CD4-positive, alpha-beta memory T cell (primary cell): ENCODE measurements at regions of chr2 and their contacts with region 1.

Region 1: DNA sequence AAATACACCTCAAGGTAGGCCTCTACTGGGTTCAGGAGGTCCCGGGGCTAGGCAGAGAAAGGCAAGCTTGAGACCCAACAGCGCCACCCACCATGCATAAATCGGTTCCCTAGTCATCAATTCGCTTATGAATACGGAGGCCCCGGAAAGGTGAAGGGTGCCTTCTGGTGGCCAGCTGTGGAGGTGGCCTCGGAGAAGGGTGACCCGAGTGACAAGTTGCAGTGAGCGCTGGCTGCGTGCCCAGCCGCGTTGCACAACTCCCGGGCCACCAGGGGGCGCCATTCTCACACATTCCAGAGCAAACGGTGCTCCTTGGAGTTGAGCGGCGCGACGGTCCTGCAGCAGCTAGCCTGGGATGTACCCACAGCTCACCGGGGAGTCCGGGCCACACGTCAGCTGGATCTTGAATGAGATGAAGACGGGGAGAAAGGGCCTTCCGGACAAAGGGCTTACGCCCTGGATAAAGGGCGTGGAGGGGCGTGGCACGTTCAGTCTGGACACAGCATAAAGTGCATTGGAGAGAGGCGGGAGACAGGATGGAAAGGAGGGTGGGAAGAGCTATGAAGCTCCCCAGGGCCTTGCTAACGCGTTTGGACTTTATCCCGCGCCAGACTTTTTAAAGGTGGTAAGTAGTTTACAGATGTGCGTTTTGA is 20.4 kb downstream of the TMSB10 start:
- DNase-seq: peak; percentile 96 to 97 (median 97)
- H3K4me3 ChIP-seq: peak overlapping the region; percentile 73 to 86
- H3K4me3 Mint-ChIP-seq: peak overlapping the region; percentile 90 to 99 (median 95)
- H3K27ac ChIP-seq: peak overlapping the region; percentile 62
- H3K27ac Mint-ChIP-seq: peak overlapping the region; percentile 91 to 99 (median 95)
- H3K4me1 ChIP-seq: peaks cover 40% of the 10 kb centered on the region
- H3K4me1 Mint-ChIP-seq: peaks cover 25 to 48% (median 36%) of the 10 kb centered on the region in 4 donors
- H3K27me3 ChIP-seq: no peaks in the 10 kb centered on the region
- H3K27me3 Mint-ChIP-seq: no peaks in the 10 kb centered on the region

Region 2: GRCh38 chr2:84631047-84631446 is 294.8 kb before region 1 on chr2:
- CTCF ChIA-PET with region 1: interaction called, 5 read pairs
- POLR2A ChIA-PET with region 1: interaction called, 3 read pairs
- intact Hi-C with region 1: loop called (anchors 1 kb)
- DNase-seq: peak in 4 of 5 donors; percentile 46 to 57 (median 56)
- H3K4me3 ChIP-seq: no peak overlapping the region
- H3K4me3 Mint-ChIP-seq: peak overlapping the region in 1 of 8 donors; percentile 36
- H3K27ac ChIP-seq: no peak overlapping the region
- H3K27ac Mint-ChIP-seq: peak overlapping the region in 3 of 7 donors; percentile 30 to 65 (median 59)
- H3K4me1 ChIP-seq: peaks cover 24% of the 10 kb centered on the region
- H3K4me1 Mint-ChIP-seq: peaks cover 26 to 31% (median 28%) of the 10 kb centered on the region in 4 donors
- H3K27me3 ChIP-seq: no peaks in the 10 kb centered on the region
- H3K27me3 Mint-ChIP-seq: no peaks in the 10 kb centered on the region

Region 3: DNA sequence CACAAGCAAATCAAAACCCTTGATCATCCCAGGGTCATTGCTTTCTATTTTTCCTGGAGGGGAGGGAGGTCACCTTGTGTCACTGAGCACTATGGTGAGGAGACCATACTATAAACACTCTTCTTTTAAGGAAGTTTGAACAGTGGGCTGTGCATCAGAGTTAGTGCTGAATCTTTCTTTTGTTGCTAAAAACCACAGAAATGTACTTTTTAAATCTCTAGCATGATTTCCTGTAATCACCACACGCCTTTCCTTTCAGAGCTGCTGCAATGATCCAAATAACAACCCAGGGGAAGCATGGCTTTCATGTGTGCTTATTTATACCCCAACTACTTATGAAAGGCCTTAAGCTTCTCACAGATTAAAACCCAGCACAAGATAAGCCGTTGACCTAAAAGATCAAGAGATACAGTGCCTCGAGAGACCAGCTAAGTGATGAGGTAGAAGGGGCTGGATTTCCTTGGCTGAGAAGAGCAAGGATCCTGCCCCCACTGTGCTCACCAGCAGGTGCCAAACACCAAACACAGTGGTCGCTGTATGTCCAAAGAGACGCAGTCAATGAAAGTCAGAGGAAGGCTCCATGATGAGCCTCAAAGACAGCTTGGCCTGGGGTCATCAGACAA is 79.7 kb before region 1 on chr2:
- CTCF ChIA-PET with region 1: interaction called, 18 read pairs
- POLR2A ChIA-PET with region 1: interaction called, 16 read pairs
- intact Hi-C with region 1: no loop called
- DNase-seq: peak; percentile 67 to 84 (median 78)
- H3K4me3 ChIP-seq: peak overlapping the region; percentile 11 to 15
- H3K4me3 Mint-ChIP-seq: peak overlapping the region; percentile 31 to 84 (median 74)
- H3K27ac ChIP-seq: peak overlapping the region; percentile 61
- H3K27ac Mint-ChIP-seq: peak overlapping the region; percentile 92 to 99 (median 97)
- H3K4me1 ChIP-seq: peaks cover 99% of the 10 kb centered on the region
- H3K4me1 Mint-ChIP-seq: peaks cover 81 to 98% (median 90%) of the 10 kb centered on the region in 4 donors
- H3K27me3 ChIP-seq: no peaks in the 10 kb centered on the region
- H3K27me3 Mint-ChIP-seq: no peaks in the 10 kb centered on the region

Region 4: DNA sequence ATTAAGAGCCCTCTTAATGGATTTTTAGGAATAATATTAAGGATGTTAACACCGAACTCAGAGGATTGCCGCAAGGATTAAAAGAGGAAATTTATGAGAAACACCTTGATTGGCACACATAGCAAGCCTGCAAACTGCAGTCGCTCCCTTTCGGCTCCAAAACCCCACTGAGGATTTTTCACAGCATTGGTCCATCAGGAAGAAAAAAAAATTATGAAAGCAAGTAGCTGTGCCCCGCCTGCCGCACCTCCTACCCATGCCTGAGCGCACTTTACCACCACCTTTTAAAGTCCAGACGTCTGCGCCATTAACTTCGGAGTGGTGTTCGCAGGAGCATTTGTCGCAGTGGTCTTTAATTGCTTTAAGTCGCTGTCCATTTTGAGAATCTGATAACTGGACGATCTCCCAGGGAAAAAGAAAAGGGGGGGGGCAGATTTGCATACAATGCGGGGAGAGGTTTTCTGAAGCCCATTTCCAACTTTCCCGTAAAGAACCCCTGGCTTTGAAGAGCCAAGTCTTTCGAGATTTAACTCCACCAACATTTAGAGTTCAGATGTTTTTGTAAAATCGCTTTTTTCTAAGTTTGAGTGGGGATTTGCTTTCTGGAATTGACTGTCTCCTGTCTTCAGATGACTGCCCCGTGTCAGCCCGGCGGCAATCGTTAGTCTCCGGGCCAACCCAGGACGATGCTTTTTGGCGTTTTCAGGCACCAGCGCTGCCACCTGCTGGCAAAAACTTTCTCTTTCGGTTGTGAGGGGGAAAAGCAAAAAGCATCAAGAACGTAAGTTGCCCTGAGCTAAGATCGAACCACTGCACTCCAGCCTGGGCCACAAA is 44.1 kb before region 1 on chr2:
- CTCF ChIA-PET with region 1: interaction called, 271 read pairs
- POLR2A ChIA-PET with region 1: interaction called, 105 read pairs
- intact Hi-C with region 1: loop called (anchors 1 kb)
- DNase-seq: peak; percentile 82 to 86 (median 85)
- H3K4me3 ChIP-seq: peak overlapping the region; percentile 67 to 93
- H3K4me3 Mint-ChIP-seq: peak overlapping the region; percentile 90 to 99 (median 96)
- H3K27ac ChIP-seq: peak overlapping the region; percentile 72
- H3K27ac Mint-ChIP-seq: peak overlapping the region; percentile 84 to 98 (median 97)
- H3K4me1 ChIP-seq: peaks cover 32% of the 10 kb centered on the region
- H3K4me1 Mint-ChIP-seq: peaks cover 25 to 60% (median 42%) of the 10 kb centered on the region in 4 donors
- H3K27me3 ChIP-seq: no peaks in the 10 kb centered on the region
- H3K27me3 Mint-ChIP-seq: no peaks in the 10 kb centered on the region

Region 5: DNA sequence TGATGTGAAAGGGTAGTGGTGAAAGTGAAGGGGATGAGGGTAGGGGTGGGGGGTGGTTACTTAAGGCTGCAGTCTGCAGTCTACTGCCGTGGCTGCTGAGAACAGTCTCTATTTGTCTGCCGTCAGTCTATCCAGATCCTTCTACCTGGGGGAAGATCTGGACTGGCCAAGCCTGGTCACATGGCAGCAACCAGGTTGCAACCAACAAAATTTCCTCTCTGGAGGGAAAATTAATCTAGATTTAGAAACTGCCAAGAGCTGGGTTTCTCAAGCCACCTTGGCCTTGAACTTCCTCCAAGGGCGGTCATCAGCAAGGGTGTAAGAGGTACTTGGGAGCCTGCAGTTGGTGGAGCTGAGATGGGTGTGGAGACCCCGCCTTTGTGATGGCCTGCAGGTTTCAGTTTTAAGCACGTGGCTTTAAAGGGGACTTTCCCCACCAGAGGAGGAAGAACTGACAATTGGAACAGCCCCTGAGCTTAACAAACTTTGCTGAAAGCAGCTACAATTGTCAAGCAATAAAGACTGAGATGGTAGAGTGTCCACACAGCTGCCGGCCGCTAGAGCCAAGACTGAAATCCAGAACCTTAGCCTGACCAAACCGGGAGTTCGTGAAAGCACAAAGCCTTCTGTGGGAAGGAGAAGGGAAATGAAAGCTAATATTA is 13.7 kb after region 1 on chr2:
- CTCF ChIA-PET with region 1: interaction called, 111 read pairs
- POLR2A ChIA-PET with region 1: interaction called, 45 read pairs
- intact Hi-C with region 1: loop called (anchors 1 kb)
- DNase-seq: peak; percentile 79 to 91 (median 83)
- H3K4me3 ChIP-seq: peak overlapping the region; percentile 34 to 45
- H3K4me3 Mint-ChIP-seq: peak overlapping the region; percentile 76 to 89 (median 87)
- H3K27ac ChIP-seq: peak overlapping the region; percentile 82
- H3K27ac Mint-ChIP-seq: peak overlapping the region; percentile 95 to 99 (median 98)
- H3K4me1 ChIP-seq: peaks cover 24% of the 10 kb centered on the region
- H3K4me1 Mint-ChIP-seq: peaks cover 15 to 34% (median 28%) of the 10 kb centered on the region in 4 donors
- H3K27me3 ChIP-seq: no peaks in the 10 kb centered on the region
- H3K27me3 Mint-ChIP-seq: no peaks in the 10 kb centered on the region

Region 6: DNA sequence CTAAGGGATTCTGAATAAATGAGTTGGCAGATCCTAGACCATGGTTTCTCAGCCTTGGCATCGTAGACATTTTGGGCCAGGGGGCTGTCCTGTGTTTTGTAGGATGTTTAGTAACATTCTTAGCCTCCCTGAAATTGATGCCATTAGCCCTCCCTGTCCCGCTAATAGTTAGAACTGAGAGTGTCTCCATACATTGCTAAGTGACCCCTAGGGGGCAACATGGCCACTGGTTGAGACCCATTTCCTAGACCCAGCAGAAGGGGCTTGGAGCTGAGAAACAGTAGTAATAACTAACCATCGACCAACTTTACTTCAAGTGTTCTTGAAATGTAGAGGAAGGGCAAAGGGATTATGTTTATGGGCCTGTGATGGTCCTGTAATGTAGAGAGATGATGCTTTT is 85.9 kb after region 1 on chr2:
- CTCF ChIA-PET with region 1: interaction called, 13 read pairs
- POLR2A ChIA-PET with region 1: interaction called, 13 read pairs
- intact Hi-C with region 1: loop called (anchors 1 kb)
- DNase-seq: no peak
- H3K4me3 ChIP-seq: no peak overlapping the region
- H3K4me3 Mint-ChIP-seq: peak overlapping the region in 1 of 8 donors; percentile 3
- H3K27ac ChIP-seq: no peak overlapping the region
- H3K27ac Mint-ChIP-seq: peak overlapping the region in 6 of 7 donors; percentile 15 to 89 (median 70)
- H3K4me1 ChIP-seq: peaks cover 57% of the 10 kb centered on the region
- H3K4me1 Mint-ChIP-seq: peaks cover 57 to 84% (median 70%) of the 10 kb centered on the region in 4 donors
- H3K27me3 ChIP-seq: no peaks in the 10 kb centered on the region
- H3K27me3 Mint-ChIP-seq: no peaks in the 10 kb centered on the region

Region 7: GRCh38 chr2:85111819-85112281 is 186.0 kb after region 1 on chr2:
- CTCF ChIA-PET with region 1: no interaction called
- POLR2A ChIA-PET with region 1: no interaction called
- intact Hi-C with region 1: no loop called
- DNase-seq: no peak
- H3K4me3 ChIP-seq: no peak overlapping the region
- H3K4me3 Mint-ChIP-seq: no peak overlapping the region
- H3K27ac ChIP-seq: no peak overlapping the region
- H3K27ac Mint-ChIP-seq: no peak overlapping the region
- H3K4me1 ChIP-seq: no peaks in the 10 kb centered on the region
- H3K4me1 Mint-ChIP-seq: no peaks in the 10 kb centered on the region
- H3K27me3 ChIP-seq: peaks cover 8% of the 10 kb centered on the region
- H3K27me3 Mint-ChIP-seq: peaks cover 10 to 20% of the 10 kb centered on the region in 2 donors